ENCODE measurements at regions of chr15 and their contacts with region 1.

Region 1: DNA sequence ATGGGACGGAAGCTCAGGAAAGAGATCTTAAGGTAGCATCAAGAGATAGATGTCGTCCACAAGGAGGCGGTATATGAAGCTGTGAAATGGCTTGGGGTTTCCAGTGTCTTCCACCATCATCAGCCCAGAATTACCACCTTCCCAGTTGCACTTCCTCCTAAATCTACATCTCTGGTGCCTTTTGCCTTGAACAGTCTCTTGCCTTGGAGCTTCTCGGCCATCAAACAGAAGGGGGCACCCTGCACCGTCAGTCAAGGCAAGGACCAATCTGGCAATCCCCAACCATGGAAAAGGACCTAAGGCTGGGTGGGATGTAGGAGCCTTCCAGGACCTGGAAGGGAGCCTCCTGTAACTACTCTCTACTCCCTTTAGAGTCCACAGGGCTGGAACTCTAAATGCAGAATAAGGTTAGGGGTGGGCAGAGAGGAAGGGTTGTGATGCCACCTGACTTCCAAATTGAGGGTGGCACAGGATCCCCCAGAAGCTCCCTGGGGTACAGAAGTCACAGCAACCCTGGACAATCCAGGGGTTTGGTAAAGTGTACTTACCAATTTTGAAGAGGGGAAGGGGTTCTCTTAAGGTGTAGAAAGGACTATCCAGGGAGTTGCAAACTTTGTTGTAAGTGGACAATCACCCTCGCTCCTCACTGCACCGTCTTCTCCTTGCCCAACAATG is 1.0 kb upstream of the RYR3 start:
- DNase-seq: no peak
- ATAC-seq: peak; percentile 79

Region 2: DNA sequence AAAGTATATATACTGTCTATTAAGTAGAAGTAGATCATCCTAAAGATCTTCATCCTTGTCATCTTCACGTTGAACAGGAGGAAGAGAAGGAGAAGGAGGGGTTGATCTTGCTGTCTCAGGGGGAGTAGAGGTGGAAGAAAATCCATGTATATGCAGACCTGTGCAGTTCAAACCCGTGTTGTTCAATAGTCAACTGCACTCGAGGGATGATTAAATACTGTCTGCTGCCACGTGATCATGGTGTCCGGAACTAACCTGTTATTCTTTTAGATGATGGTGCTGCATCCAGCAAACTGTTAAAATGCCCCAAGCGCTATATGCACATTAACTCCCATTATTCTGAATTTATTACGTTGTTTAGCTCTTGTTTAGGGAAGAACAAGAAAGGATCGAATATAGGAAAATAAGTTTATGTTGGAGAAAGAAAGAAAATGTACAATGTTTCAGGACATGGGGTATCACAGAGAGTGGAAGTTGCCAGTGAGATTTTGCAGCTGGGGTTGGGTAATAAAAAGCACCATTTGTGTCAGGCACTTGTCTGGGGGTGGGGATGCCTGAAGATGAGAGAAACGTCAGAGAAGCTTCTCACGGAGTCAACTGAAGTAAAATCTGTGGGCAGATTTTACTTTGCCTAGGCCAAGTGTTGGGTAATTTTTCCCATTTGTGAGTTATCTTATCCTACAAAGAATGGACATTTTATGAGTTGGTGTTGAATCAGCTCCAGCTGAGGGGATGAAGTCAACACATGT is 230.3 kb after region 1 on chr15:
- intact Hi-C with region 1: no loop called
- DNase-seq: no peak
- ATAC-seq: no peak

Region 3: GRCh38 chr15:33700695-33701304 is 391.1 kb after region 1 on chr15:
- intact Hi-C with region 1: loop called (anchors 10 kb)
- DNase-seq: peak; percentile 76
- ATAC-seq: peak; percentile 86